ENCODE measurements at regions of chr3 and their contacts with region 1.

Region 1: DNA sequence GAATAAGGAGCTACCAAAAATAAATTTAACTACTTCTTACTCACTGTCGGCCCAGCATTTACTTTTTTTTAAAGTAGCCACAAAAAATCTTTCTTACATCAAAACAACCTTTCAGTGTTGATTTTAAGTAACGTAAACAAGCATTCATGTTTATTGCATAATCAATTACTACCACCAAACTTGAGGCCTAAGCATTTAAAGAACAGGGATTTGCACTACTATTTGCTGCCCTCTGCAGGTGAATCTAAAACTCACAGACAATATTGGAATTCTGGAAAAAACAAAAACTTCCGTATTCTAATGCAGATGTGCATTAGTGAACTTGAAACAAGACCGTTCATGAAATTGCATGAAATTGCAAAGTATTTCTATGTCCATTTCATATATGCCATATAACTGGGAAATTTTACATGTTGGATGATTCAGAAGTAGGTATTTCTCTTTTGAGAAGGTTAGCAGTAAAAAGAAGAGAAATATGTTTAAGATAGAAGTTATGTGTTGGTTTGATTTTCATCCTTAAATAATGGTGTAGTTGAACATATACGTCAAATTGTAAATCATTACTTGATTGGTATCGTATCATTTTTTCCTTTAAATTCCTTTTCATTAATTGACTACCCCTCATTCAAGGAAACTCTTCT is 55.6 kb downstream of the CGGBP1 start:
- DNase-seq: peak; percentile 32
- ATAC-seq: peak; percentile 52; the same call in 2 of the 3 replicates
- H3K4me3 ChIP-seq: no peak overlapping the region
- H3K27ac ChIP-seq: no peak overlapping the region
- H3K4me1 ChIP-seq: no peaks in the 10 kb centered on the region
- H3K27me3 ChIP-seq: no peaks in the 10 kb centered on the region; a peak in 1 of 5 replicates
- CTCF ChIP-seq: peak; percentile 70
- EP300 ChIP-seq: no peak
- POLR2A ChIP-seq: no peak
- RAD21 ChIP-seq: 0 out of 2 replicates have a peak, but pooled peaks have one; percentile 32

Region 2: DNA sequence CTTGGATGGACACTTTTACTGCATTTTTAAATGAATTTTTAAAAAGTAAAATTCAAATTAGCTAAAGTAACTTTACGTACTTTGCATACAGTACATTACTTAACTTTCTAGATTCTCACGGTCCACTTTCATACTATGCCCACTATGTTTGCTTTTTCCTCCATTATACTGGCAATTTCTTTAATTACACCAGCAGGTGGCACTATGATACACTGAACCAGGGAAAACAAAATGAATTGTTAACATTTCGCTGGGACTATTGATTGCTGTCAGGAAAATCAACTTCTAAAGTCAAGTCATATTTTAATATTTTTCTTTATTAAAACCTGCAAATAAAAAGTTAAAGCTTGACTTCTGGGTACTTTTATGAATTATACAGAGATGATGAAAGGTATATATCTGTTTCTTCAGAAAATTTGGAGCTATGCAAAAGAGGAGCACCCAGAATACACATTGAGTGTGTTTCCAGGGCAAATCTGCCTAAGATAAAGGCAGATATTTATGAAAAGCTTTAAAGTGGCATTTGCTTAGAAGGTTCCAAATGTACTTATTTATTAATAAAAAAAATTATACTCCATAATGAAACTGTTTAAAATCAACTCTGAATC is 705.0 kb before region 1 on chr3:
- CTCF ChIA-PET with region 1: interaction called, 14 read pairs
- POLR2A ChIA-PET with region 1: no interaction called
- in situ Hi-C with region 1: loop called (anchors 25 kb)
- intact Hi-C with region 1: loop called (anchors 1 kb)
- DNase-seq: peak; percentile 54
- ATAC-seq: peak; percentile 74
- H3K4me3 ChIP-seq: no peak overlapping the region
- H3K27ac ChIP-seq: no peak overlapping the region
- H3K4me1 ChIP-seq: no peaks in the 10 kb centered on the region
- H3K27me3 ChIP-seq: no peaks in the 10 kb centered on the region
- CTCF ChIP-seq: peak; percentile 70
- EP300 ChIP-seq: no peak
- POLR2A ChIP-seq: no peak
- RAD21 ChIP-seq: no peak

Region 3: DNA sequence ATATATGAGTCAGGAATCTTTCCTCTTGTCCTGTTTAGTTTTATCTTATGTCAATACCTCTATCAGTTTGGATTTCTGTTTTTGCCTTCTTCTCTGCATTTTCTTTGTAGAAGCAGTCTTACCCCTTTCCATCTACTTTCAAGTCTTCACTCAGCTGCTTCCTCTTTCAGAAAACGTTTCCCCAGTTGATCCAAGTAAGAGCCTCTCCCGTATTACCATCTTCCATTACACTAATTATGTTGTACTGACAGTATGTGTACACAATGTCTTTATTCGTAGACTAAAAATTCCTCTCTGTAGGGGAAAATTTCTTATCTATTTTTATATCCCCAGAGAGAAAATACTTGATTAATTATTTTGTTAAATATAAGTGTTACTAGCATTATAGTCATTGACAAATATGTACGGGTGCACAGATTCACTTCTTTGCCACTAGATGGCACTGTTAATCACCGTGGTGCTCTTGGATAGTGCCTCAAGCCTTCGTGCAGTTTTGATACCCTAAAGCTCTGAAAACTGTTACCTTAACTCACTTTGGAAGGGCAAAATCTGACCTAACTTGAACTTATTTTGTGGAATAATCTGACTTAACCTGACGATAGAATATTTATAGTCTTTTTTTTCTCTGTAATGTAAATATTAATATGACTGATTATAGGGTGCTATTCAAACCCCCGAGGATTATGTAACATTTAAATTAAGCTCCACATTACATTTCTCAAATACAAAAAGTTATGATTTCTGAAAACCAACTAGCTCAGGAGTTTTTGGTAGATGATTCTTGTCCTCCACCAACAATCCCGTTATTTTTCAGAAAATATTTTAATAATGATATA is 652.7 kb before region 1 on chr3:
- CTCF ChIA-PET with region 1: interaction called, 5 read pairs
- POLR2A ChIA-PET with region 1: no interaction called
- in situ Hi-C with region 1: no loop called
- intact Hi-C with region 1: loop called (anchors 1 kb)
- DNase-seq: peak; percentile 41
- ATAC-seq: peak; percentile 93
- H3K4me3 ChIP-seq: no peak overlapping the region
- H3K27ac ChIP-seq: no peak overlapping the region
- H3K4me1 ChIP-seq: no peaks in the 10 kb centered on the region
- H3K27me3 ChIP-seq: no peaks in the 10 kb centered on the region
- CTCF ChIP-seq: peak; percentile 73
- EP300 ChIP-seq: no peak
- POLR2A ChIP-seq: no peak
- RAD21 ChIP-seq: 0 out of 2 replicates have a peak, but pooled peaks have one; percentile 25

Region 4: DNA sequence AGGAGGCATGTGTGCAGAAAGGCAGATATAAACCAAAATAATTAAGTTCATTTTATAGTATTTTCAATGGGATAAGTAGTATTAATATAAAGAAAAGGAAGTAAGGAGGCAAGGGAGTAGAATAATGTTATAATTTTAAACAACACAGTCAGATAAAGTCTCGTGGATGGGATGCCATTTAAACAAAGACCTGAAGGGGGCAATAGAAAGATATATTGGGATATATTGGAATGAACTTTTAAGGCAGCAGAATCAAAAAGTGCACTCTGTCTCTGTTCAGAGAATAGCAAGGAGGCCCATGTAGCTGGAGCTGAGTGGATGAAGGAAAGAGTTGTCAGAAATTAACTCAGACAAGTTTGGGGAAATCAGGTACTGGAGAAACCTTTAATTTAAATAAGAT is 103.2 kb before region 1 on chr3:
- CTCF ChIA-PET with region 1: no interaction called
- POLR2A ChIA-PET with region 1: no interaction called
- in situ Hi-C with region 1: no loop called
- intact Hi-C with region 1: loop called (anchors 5 kb)
- DNase-seq: no peak
- ATAC-seq: no peak; the same call in 2 of the 3 replicates
- H3K4me3 ChIP-seq: no peak overlapping the region
- H3K27ac ChIP-seq: no peak overlapping the region
- H3K4me1 ChIP-seq: no peaks in the 10 kb centered on the region
- H3K27me3 ChIP-seq: no peaks in the 10 kb centered on the region
- CTCF ChIP-seq: no peak
- EP300 ChIP-seq: no peak
- POLR2A ChIP-seq: no peak
- RAD21 ChIP-seq: no peak

Region 5: DNA sequence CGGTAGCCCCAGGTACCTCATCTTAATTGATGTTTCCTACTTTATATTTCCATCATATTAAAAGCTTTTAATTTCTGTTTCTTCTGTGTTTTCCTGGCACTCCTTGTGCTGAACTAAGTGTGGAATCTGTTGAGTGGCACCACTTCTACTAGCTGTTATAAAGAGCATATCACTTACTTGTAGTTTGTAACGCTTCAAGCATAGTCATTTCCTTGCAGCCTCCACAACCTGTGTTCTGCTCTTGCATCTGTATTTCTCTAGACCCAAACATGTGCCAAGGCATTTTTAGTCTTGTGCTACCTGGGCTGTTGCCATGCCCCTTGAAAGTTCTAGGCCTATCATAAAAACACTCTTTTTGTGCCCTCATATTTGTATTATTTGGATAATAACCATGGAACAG is 71.8 kb after region 1 on chr3:
- CTCF ChIA-PET with region 1: no interaction called
- POLR2A ChIA-PET with region 1: no interaction called
- in situ Hi-C with region 1: no loop called
- intact Hi-C with region 1: no loop called
- DNase-seq: no peak
- ATAC-seq: no peak
- H3K4me3 ChIP-seq: no peak overlapping the region
- H3K27ac ChIP-seq: no peak overlapping the region
- H3K4me1 ChIP-seq: peaks cover 9% of the 10 kb centered on the region; the same call in 1 of the 2 replicates
- H3K27me3 ChIP-seq: no peaks in the 10 kb centered on the region
- CTCF ChIP-seq: no peak
- EP300 ChIP-seq: no peak
- POLR2A ChIP-seq: no peak
- RAD21 ChIP-seq: no peak

Measured in HepG2 (cell line).